AG04450 (cell line): ENCODE measurements at regions of chr10 and their contacts with region 1.

Region 1: DNA sequence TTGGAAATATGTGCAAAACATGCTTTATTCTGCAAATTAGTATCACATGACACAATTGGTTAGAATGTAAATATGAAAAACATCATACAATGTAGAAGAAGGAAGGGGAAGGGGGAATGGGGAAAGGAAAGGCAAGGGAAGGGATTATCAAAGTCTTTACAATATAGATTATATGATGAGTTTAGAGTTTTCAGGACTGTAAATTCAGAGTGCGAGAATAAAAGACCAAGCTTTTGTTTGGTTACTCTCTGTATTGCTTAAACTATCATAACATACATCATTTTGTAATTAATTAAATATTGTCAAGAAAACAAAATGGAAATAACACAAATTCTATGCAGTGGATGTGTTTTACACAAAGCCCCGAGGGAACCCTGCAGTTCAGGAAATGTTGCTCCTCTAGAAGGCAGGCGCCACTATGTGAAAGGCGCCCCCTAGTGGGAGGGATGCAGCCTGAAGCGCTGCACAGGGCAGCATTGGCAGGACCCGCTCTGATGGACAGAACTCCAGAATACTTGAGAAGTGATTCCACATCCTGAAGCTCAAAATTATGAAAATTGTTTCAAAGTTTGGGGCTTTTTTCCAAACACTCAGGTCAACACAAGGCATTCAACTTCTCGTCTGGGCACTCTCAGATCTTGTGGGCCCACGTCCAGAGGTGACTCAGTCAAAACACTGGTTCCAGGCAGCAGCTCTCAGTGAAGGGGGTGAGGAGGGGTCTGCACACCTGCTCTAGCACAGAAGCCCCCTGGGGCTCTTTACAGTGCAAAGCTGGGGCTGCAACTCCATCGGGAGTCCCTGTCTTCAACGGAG is 31.6 kb upstream of the TMEM254 start:
- DNase-seq: peak; percentile 32
- H3K4me3 ChIP-seq: no peak overlapping the region
- H3K27ac ChIP-seq: no peak overlapping the region
- H3K27me3 ChIP-seq: peaks cover 4% of the 10 kb centered on the region
- CTCF ChIP-seq: peak; percentile 93

Region 2: GRCh38 chr10:79542626-79543025 is 504.2 kb before region 1 on chr10:
- CTCF ChIA-PET with region 1: interaction called, 18 read pairs
- POLR2A ChIA-PET with region 1: no interaction called
- DNase-seq: no peak
- H3K4me3 ChIP-seq: no peak overlapping the region
- H3K27ac ChIP-seq: no peak overlapping the region
- H3K27me3 ChIP-seq: peaks cover 5% of the 10 kb centered on the region
- CTCF ChIP-seq: no peak

Region 3: DNA sequence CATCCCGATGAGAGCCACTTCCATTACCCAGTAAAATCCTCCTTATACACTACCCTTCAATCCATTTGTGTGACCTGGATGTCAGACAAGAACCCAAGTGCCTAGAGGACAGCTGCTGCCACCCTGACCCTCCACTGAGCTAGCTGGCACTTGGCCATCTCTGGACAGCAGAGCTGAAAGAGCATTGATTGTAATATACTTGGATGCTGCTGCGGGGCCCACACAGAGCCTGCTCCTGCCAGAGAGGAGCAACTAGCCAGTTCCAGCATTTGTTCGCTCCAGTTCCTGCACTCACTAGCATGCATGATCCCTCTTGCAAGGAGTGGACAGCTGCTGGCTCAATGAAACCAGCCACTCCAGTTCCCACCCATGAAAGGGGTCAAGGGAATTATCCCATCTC is 23.2 kb after region 1 on chr10:
- CTCF ChIA-PET with region 1: interaction called, 10 read pairs
- POLR2A ChIA-PET with region 1: no interaction called
- DNase-seq: no peak
- H3K4me3 ChIP-seq: no peak overlapping the region
- H3K27ac ChIP-seq: no peak overlapping the region
- H3K27me3 ChIP-seq: no peaks in the 10 kb centered on the region
- CTCF ChIP-seq: no peak

Region 4: GRCh38 chr10:80136081-80136571 is 89.3 kb after region 1 on chr10:
- CTCF ChIA-PET with region 1: no interaction called
- POLR2A ChIA-PET with region 1: no interaction called
- DNase-seq: peak; percentile 65
- H3K4me3 ChIP-seq: no peak overlapping the region
- H3K27ac ChIP-seq: peak overlapping the region; percentile 73
- H3K27me3 ChIP-seq: no peaks in the 10 kb centered on the region
- CTCF ChIP-seq: no peak